Psoas muscle (tissue), 8 donors: ENCODE measurements at regions of chr20 and their contacts with region 1.

Region 1: DNA sequence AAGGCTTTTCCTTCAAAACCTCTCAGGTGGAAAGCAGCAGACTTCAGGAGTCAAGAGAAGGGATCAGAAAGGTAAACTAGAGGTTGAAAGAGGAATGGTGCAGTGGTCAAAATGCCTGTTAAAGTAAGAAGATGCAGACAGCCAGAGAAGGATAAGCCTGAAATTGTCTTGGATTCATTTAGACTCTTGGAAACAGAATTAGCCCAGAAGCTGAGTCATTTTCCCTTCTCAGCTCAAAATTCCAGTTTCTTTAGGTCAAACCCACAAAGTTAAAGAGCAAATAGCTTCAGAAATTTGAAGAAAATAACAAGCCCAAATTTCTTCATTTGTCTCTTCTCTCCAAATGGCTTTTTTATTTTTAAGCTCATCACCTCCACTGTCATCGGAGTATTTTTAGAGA is 73.9 kb downstream of the DHX35 start:
- DNase-seq: no peak
- ATAC-seq: no peak
- H3K4me3 ChIP-seq: no peak overlapping the region
- H3K27ac ChIP-seq: no peak overlapping the region
- H3K4me1 ChIP-seq: no peaks in the 10 kb centered on the region
- H3K27me3 ChIP-seq: no peaks in the 10 kb centered on the region
- CTCF ChIP-seq: no peak

Region 2: DNA sequence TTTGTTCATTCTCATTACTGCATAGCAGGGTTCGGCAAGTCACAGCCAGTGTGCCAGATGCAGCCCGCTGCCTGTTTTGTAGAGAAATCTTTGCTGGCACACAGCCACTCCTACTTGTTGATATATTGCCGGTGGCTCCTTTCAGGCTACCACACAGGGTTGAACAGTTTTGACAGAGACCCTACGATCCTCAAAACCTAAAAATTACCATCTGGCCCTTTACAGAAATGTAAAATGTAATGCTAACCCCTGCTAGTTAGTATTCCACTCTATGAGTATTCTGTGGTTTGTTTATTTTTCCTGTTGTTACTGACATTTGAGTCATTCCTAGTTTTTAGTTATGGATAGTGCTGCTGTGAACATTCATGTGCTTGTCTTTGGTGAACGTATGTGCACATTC is 62.4 kb before region 1 on chr20:
- intact Hi-C with region 1: loop called in 1 of 2 experiments (anchors 10 kb)
- DNase-seq: no peak
- ATAC-seq: no peak
- H3K4me3 ChIP-seq: no peak overlapping the region
- H3K27ac ChIP-seq: no peak overlapping the region
- H3K4me1 ChIP-seq: no peaks in the 10 kb centered on the region
- H3K27me3 ChIP-seq: no peaks in the 10 kb centered on the region
- CTCF ChIP-seq: no peak